PC-3 (cell line): ENCODE measurements at regions of chr6 and their contacts with region 1.

Region 1: DNA sequence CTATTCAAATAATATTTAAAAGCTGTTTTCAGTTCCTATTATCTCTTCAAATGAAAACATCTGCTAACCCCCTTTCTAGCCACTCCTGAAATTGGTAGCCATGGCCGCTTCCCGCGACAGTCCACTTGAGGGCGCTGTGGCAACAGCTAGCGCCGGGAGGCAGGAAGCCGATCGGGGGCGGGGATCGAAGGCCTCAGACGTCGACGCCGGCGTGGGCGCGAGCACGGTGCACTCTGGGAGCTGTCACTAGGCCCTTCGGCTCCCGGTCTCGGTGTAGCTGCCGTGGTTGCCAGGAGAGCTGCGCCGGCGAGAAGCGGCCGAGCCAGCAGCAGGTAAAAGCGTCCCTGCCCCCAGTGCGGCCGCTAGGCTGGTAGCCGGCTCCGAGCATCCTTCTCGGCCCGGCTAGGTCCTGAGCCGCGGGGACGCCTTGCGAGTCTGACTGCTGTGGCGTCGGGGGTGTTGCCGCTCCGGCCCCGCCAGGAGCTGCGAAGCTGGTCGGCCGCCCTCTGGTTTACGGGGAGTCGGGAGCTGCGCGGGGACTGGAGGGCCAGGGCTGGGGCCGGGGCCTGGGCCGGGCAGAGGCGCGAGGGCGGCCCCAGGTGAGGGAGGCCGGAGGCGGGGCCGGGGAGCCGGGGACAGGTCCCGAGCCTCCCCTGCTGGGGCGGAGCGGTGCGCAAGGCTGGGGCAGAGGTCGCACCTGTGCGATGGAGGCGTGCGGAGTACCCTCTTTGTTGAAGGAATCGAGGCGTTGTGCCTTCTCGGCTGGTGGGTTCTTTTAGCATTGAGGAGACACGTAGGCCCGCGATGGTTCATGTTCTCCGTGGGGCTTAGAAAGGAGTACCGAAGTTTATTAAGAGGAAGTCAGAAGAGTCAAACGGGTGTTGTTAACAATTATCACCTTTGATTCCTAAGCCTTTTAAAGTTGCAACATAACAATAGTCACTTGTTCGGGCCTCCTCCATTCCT is at the start of gene DOP1A:
- DNase-seq: peak; percentile 93
- ATAC-seq: peak; percentile 85
- H3K4me3 ChIP-seq: peak within 1 kb of the TSS; percentile 90
- H3K27ac ChIP-seq: peak within 1 kb of the TSS; percentile 28
- H3K4me1 ChIP-seq: peaks cover 19% of the 10 kb centered on the region; the same call in 1 of the 2 replicates
- H3K27me3 ChIP-seq: no peaks in the 10 kb centered on the region
- CTCF ChIP-seq: peak; percentile 85
- total RNA-seq, gene DOP1A: 5.5 and 7.5 TPM in 2 replicates

Region 2: GRCh38 chr6:82247634-82248232 is 820.0 kb before region 1 on chr6 and contains the start of gene IBTK:
- CTCF ChIA-PET with region 1: interaction called, 6 read pairs
- POLR2A ChIA-PET with region 1: no interaction called
- intact Hi-C with region 1: loop called (anchors 5 kb)
- DNase-seq: peak; percentile 88
- ATAC-seq: peak; percentile 70
- H3K4me3 ChIP-seq: peak within 1 kb of the TSS; percentile 84
- H3K27ac ChIP-seq: peak within 1 kb of the TSS; percentile 100
- H3K4me1 ChIP-seq: peaks cover 38% of the 10 kb centered on the region
- H3K27me3 ChIP-seq: no peaks in the 10 kb centered on the region
- CTCF ChIP-seq: no peak
- total RNA-seq, gene IBTK: 17.2 and 20.0 TPM in 2 replicates

Region 3: DNA sequence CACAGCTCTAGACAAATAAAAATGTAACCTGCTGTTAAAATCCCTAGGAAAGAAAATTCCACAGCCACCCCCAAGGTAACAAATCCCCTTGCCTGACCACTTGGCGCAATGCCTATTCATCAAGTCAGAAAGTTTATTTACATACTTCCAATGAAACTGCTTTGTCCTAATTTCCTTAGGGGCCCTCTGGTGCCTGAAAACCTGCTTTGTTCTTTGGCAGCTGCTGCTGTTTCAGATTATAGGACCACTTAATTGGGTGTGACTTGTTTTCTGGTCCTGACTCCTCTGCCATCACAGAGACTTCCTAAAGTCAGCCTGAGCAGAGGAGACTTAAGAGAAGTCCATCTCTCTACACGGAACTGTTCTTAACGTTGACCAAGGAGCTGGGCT is 325.7 kb before region 1 on chr6:
- CTCF ChIA-PET with region 1: no interaction called
- POLR2A ChIA-PET with region 1: no interaction called
- intact Hi-C with region 1: no loop called
- DNase-seq: no peak
- ATAC-seq: no peak
- H3K4me3 ChIP-seq: no peak overlapping the region
- H3K27ac ChIP-seq: no peak overlapping the region
- H3K4me1 ChIP-seq: peaks cover 7% of the 10 kb centered on the region; the same call in 1 of the 2 replicates
- H3K27me3 ChIP-seq: no peaks in the 10 kb centered on the region
- CTCF ChIP-seq: no peak

Region 4: DNA sequence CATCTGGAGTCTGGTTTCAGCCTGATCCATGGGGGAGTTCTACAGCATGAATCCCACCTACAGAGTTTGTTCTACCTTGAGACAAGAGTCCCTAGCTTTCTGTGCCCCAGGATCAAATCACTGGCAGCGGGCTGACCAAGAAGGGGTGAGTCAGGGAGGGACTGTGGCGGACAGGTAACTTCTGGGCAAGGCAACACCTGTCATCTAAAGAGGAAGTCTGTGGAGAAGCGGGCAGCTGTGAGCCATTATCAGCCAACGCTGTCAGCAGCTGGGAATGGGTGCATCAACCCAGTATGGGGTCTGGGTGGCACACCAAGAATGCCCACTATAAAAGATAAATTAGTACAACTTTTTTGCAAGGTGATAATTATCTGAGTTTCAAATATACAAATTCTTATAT is 48.0 kb before region 1 on chr6:
- CTCF ChIA-PET with region 1: no interaction called
- POLR2A ChIA-PET with region 1: no interaction called
- intact Hi-C with region 1: no loop called
- DNase-seq: no peak
- ATAC-seq: no peak
- H3K4me3 ChIP-seq: no peak overlapping the region
- H3K27ac ChIP-seq: no peak overlapping the region
- H3K4me1 ChIP-seq: no peaks in the 10 kb centered on the region
- H3K27me3 ChIP-seq: no peaks in the 10 kb centered on the region
- CTCF ChIP-seq: no peak

Region 5: GRCh38 chr6:83192871-83193746 is 125.4 kb after region 1 on chr6 and contains the starts of genes PGM3 and RWDD2A:
- CTCF ChIA-PET with region 1: interaction called, 6 read pairs
- POLR2A ChIA-PET with region 1: no interaction called
- intact Hi-C with region 1: loop called (anchors 5 kb)
- DNase-seq: peak; percentile 80
- ATAC-seq: peak; percentile 83
- H3K4me3 ChIP-seq: peak within 1 kb of the TSS; percentile 86
- H3K27ac ChIP-seq: peak within 1 kb of the TSS; percentile 42
- H3K4me1 ChIP-seq: peaks cover 18% of the 10 kb centered on the region
- H3K27me3 ChIP-seq: no peaks in the 10 kb centered on the region
- CTCF ChIP-seq: no peak
- total RNA-seq, gene PGM3: 17.0 and 25.2 TPM in 2 replicates
- total RNA-seq, gene RWDD2A: 0.63 and 1.3 TPM in 2 replicates

Region 6: GRCh38 chr6:83215131-83216047 is 147.7 kb after region 1 on chr6:
- CTCF ChIA-PET with region 1: interaction called, 25 read pairs
- POLR2A ChIA-PET with region 1: no interaction called
- intact Hi-C with region 1: loop called (anchors 1 kb)
- DNase-seq: peak; percentile 53
- ATAC-seq: peak; percentile 72; the same call in 1 of the 2 replicates
- H3K4me3 ChIP-seq: no peak overlapping the region
- H3K27ac ChIP-seq: no peak overlapping the region
- H3K4me1 ChIP-seq: no peaks in the 10 kb centered on the region
- H3K27me3 ChIP-seq: no peaks in the 10 kb centered on the region
- CTCF ChIP-seq: peak; percentile 77

Region 7: GRCh38 chr6:83430611-83431563 is 363.2 kb after region 1 on chr6 and contains the start of gene ME1:
- CTCF ChIA-PET with region 1: no interaction called
- POLR2A ChIA-PET with region 1: no interaction called
- intact Hi-C with region 1: loop called (anchors 5 kb)
- DNase-seq: peak; percentile 88
- ATAC-seq: peak; percentile 71
- H3K4me3 ChIP-seq: peak within 1 kb of the TSS; percentile 92
- H3K27ac ChIP-seq: peak within 1 kb of the TSS; percentile 89
- H3K4me1 ChIP-seq: peaks cover 58% of the 10 kb centered on the region
- H3K27me3 ChIP-seq: no peaks in the 10 kb centered on the region
- CTCF ChIP-seq: no peak
- total RNA-seq, gene ME1: 22.3 and 28.0 TPM in 2 replicates

Region 8: GRCh38 chr6:83514866-83515466 is 447.2 kb after region 1 on chr6:
- CTCF ChIA-PET with region 1: interaction called, 6 read pairs
- POLR2A ChIA-PET with region 1: interaction called, 4 read pairs
- intact Hi-C with region 1: loop called (anchors 2 kb)
- DNase-seq: peak; percentile 85
- ATAC-seq: peak; percentile 34
- H3K4me3 ChIP-seq: no peak overlapping the region
- H3K27ac ChIP-seq: no peak overlapping the region
- H3K4me1 ChIP-seq: peaks cover 14% of the 10 kb centered on the region
- H3K27me3 ChIP-seq: no peaks in the 10 kb centered on the region
- CTCF ChIP-seq: peak; percentile 86